Breast epithelium (tissue), 4 donors: ENCODE measurements at regions of chr5 and their contacts with region 1.

Region 1: DNA sequence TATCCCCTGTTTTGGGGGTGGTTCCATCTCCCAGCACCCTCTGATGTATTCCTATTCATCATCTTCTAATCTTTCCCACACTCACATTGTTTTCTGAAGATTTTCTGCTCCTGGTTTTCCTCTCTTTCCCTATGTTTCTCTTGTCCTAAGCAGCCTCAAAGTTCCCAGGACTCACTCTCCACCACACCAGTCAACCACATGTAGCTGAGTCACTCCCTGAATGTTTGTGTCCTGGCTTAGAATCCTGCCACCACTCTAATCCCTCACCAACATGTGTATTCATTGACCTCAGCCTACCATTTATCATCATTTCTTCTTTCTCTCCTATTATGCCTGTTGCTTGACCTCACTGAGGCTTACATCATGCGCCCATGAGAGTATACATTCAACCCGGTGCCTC is 282.4 kb upstream of the ADAMTS16 start:
- DNase-seq: no peak
- H3K4me3 ChIP-seq: no peak overlapping the region
- H3K27ac ChIP-seq: no peak overlapping the region
- H3K4me1 ChIP-seq: no peaks in the 10 kb centered on the region
- H3K27me3 ChIP-seq: no peaks in the 10 kb centered on the region
- CTCF ChIP-seq: no peak
- POLR2A ChIP-seq: no peak

Region 2: DNA sequence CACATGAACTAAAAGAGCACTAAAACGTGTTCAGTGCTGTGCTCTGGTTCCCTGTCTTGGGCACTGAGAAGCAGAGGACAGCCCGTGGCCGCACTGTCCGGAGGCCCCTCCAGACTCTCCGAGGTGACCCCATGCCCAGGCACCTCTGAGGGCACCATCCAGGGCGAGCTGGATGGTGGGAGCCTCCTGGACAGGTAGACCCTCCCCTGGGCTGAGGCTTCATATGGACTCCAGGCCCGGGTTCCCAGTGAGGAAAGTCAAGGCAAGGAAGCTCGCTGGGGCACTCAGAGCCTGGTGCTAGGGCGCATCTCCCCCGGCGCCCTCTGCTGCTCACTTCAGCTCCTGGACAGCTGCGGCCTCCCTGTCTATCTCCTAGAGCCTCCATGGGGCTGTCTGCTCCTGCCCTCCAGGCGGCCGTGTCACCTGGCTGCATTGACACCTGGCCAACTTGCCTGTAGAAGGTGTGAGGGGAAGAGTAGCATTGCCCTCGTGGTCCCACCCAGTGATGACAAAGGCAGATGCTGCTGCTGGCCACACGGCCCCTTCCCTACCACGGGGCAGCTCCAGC is 1440.3 kb before region 1 on chr5:
- intact Hi-C with region 1: loop called (anchors 10 kb)
- DNase-seq: no peak
- H3K4me3 ChIP-seq: no peak overlapping the region
- H3K27ac ChIP-seq: no peak overlapping the region
- H3K4me1 ChIP-seq: no peaks in the 10 kb centered on the region
- H3K27me3 ChIP-seq: no peaks in the 10 kb centered on the region
- CTCF ChIP-seq: no peak
- POLR2A ChIP-seq: no peak